Activated CD4-positive, alpha-beta memory T cell treated with anti-CD3 and anti-CD28 coated beads for 36 hours (primary cell): ENCODE measurements at regions of chr16 and their contacts with region 1.

Region 1: GRCh38 chr16:50806099-50807062 is 64.5 kb downstream of the CYLD start:
- DNase-seq: peak; percentile 90
- H3K4me3 Mint-ChIP-seq: peak overlapping the region; percentile 67
- H3K27ac Mint-ChIP-seq: peak overlapping the region; percentile 72
- H3K4me1 Mint-ChIP-seq: peaks cover 12% of the 10 kb centered on the region
- H3K27me3 Mint-ChIP-seq: no peaks in the 10 kb centered on the region

Region 2: GRCh38 chr16:50011707-50012106 is 794.7 kb before region 1 on chr16:
- CTCF ChIA-PET with region 1: no interaction called
- POLR2A ChIA-PET with region 1: no interaction called
- intact Hi-C with region 1: no loop called
- DNase-seq: no peak
- H3K4me3 Mint-ChIP-seq: no peak overlapping the region
- H3K27ac Mint-ChIP-seq: no peak overlapping the region
- H3K4me1 Mint-ChIP-seq: no peaks in the 10 kb centered on the region
- H3K27me3 Mint-ChIP-seq: no peaks in the 10 kb centered on the region

Region 3: DNA sequence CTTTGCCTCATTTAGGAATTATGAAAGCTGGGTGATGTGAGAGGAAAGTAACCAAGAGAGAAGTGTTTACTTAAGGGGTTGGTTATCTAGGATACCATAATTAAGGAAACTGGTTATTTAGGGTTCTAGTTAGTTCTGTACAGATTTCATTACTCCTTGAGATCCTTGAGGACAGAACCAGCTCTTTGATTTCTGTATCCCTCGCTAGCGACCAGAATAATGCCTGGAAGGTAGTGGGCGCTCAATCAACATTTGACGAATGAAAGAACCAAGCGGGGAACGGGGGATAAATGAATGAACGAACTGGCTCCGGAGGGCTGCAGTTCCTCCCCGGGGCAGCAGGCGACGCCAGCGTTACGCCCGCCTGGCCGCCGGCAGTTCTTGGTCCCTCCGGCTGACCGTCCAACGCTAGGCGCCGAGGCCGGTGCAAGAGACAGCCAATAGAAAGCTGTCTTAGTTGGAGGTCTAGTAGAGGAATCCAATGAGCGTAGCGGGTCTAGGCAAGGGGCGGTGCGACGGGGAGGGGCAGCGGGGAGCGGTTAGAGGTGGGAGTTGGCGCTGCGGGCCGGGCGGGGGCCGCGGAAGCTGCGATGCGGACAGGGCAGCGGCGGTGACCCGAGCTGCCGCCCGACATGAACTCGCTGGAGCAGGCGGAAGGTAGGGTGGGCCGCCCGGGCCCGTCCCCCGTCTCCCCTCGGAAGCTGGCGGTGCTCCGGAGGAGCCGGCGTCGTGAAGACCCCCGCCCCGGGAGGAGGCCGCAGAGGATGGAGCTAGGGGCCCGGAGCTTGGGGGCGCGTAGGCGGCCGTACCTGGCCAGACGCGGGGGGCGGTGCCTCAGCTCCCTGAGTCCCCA is 781.5 kb before region 1 on chr16 and contains the start of gene CNEP1R1:
- CTCF ChIA-PET with region 1: interaction called, 12 read pairs
- POLR2A ChIA-PET with region 1: no interaction called
- intact Hi-C with region 1: loop called (anchors 1 kb)
- DNase-seq: peak; percentile 96
- H3K4me3 Mint-ChIP-seq: peak within 1 kb of the TSS; percentile 91
- H3K27ac Mint-ChIP-seq: peak within 1 kb of the TSS; percentile 83
- H3K4me1 Mint-ChIP-seq: peaks cover 19% of the 10 kb centered on the region
- H3K27me3 Mint-ChIP-seq: no peaks in the 10 kb centered on the region
- total RNA-seq, gene CNEP1R1: 23.9 to 24.5 TPM

Region 4: GRCh38 chr16:50335196-50335958 is 471.0 kb before region 1 on chr16:
- CTCF ChIA-PET with region 1: interaction called, 15 read pairs
- POLR2A ChIA-PET with region 1: no interaction called
- intact Hi-C with region 1: no loop called
- DNase-seq: peak; percentile 70
- H3K4me3 Mint-ChIP-seq: peak overlapping the region; percentile 32
- H3K27ac Mint-ChIP-seq: peak overlapping the region; percentile 90
- H3K4me1 Mint-ChIP-seq: peaks cover 68% of the 10 kb centered on the region
- H3K27me3 Mint-ChIP-seq: no peaks in the 10 kb centered on the region

Region 5: DNA sequence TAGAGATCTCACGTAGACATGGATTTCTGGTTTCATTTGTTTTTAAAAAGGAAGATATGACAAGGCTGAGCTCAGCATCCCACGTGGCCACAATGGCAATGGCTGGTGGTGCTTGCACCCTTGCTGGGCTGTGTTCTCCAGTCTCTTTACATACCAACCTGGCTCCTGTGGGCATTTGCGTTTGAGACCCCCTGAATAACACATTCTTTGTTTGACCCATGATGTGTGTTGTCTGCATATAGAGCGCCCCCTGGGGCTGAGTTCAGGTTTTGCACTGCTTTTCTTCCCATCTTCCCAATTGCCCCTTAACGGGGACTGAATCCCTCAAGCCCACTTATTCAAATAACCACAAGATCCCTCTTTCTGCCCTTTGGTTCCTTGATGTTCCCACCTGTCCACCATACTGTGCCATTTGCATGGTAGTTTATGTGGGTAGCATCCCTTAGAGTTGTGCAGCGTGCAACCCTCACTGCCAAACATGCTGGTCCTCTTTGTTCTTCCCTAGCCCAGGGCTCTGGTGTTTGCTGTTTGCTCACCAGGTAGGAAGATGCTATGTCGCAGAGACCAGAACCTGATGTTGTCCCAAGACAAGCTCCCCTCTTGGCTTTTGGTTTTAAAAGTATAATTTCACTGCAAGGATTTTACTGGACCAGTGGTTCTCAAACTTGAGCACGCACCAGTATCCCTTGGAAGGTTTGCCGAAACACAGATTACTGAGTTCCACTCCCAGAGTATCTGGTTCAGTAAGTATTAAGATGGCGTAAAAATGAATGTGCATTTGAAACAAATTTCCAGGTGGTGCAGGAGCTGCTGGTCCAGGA is 296.6 kb before region 1 on chr16:
- CTCF ChIA-PET with region 1: interaction called, 7 read pairs
- POLR2A ChIA-PET with region 1: no interaction called
- intact Hi-C with region 1: loop called (anchors 1 kb)
- DNase-seq: peak; percentile 66
- H3K4me3 Mint-ChIP-seq: no peak overlapping the region
- H3K27ac Mint-ChIP-seq: no peak overlapping the region
- H3K4me1 Mint-ChIP-seq: no peaks in the 10 kb centered on the region
- H3K27me3 Mint-ChIP-seq: no peaks in the 10 kb centered on the region

Region 6: GRCh38 chr16:50719518-50720337 is 86.7 kb before region 1 on chr16:
- CTCF ChIA-PET with region 1: interaction called, 12 read pairs
- POLR2A ChIA-PET with region 1: no interaction called
- intact Hi-C with region 1: no loop called
- DNase-seq: peak; percentile 31
- H3K4me3 Mint-ChIP-seq: no peak overlapping the region
- H3K27ac Mint-ChIP-seq: peak overlapping the region; percentile 51
- H3K4me1 Mint-ChIP-seq: peaks cover 41% of the 10 kb centered on the region
- H3K27me3 Mint-ChIP-seq: no peaks in the 10 kb centered on the region

Region 7: GRCh38 chr16:50763211-50763610 is 43.2 kb before region 1 on chr16:
- CTCF ChIA-PET with region 1: interaction called, 45 read pairs
- POLR2A ChIA-PET with region 1: no interaction called
- intact Hi-C with region 1: no loop called
- DNase-seq: no peak
- H3K4me3 Mint-ChIP-seq: no peak overlapping the region
- H3K27ac Mint-ChIP-seq: peak overlapping the region; percentile 43
- H3K4me1 Mint-ChIP-seq: peaks cover 89% of the 10 kb centered on the region
- H3K27me3 Mint-ChIP-seq: no peaks in the 10 kb centered on the region

Region 8: DNA sequence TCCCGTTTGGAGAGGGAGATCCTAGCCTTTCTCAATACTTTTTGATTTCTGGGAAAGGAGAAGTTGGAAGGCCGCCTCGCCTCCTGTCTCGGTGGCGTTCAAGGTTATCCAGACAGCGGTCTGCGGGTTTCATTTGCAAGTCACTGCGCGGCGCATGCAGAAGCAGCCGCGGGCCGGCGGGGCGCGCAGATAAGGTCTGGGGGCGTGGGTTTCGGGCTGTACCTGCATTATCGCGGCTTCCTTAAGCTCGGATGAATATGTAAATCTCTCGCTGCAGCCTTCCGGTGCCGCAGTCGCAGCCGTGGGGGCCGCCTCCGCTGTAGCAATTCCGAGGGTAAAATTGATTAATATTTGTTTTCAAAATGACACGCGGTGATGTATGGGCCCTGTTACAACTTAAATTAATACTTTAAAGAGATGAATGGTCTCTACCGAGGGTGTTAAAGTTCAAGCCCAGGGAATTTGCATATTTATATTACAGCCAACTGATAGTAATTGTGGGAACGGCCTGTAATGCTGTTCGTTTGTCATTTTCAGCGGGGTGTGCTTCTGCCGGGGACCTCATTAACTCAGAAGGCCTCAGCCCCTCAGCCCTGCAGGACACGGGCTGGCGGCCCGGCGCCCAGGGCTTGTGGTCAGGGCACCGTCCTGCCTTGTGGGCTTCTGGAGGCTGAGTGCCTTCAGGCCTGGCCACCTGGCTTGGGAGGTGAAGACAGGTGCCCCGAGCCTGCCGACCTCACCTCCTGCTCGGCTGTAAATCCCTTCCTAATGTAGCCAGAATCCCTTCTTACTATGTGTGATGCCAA is 34.9 kb after region 1 on chr16:
- CTCF ChIA-PET with region 1: interaction called, 10 read pairs
- POLR2A ChIA-PET with region 1: no interaction called
- intact Hi-C with region 1: no loop called
- DNase-seq: peak; percentile 61
- H3K4me3 Mint-ChIP-seq: peak overlapping the region; percentile 54
- H3K27ac Mint-ChIP-seq: no peak overlapping the region
- H3K4me1 Mint-ChIP-seq: peaks cover 24% of the 10 kb centered on the region
- H3K27me3 Mint-ChIP-seq: peaks cover 2% of the 10 kb centered on the region